Panc1 (cell line): ENCODE measurements at regions of chr7 and their contacts with region 1.

Region 1: DNA sequence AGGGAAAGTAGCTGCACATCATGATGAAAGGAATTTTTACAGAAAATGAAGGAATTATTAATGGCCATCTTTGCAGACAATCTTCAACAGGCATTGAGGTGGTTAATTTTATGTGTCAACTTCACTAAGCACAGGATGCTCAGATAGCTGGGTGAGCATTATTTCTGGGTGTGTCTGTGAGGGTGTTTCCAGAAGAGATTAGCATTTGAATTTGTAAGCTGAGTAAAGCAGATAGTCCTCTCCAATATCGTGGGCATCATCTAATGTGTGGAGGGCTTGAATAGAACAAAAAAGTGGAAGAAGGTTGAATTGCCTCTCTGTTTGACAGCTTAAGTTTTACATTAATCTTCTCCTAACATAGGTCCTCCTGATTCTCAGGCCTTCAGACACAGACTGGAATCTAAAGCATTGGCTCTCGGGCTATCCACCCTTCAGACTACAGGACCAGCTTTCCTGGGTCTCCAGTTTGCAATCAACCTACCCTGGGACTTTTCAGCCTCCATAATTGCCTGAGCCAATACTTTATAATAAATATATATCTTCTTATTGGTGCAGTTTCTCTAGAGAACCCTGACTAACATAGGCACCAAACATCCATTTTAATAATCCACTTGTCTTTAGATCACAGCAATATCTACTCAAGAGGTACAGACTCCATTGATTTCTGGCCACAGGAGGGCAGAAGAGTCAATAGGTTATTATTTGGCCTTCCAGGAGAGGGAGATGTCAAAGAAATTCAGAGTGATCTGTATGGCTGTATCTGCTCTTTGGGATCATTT is 10.5 kb upstream of the CRPPA start:
- DNase-seq: no peak
- ATAC-seq: peak; percentile 97
- H3K4me3 ChIP-seq: no peak overlapping the region
- H3K27ac ChIP-seq: no peak overlapping the region
- H3K4me1 ChIP-seq: no peaks in the 10 kb centered on the region
- H3K27me3 ChIP-seq: no peaks in the 10 kb centered on the region
- CTCF ChIP-seq: peak; percentile 77

Region 2: GRCh38 chr7:16078076-16078952 is 353.5 kb before region 1 on chr7:
- CTCF ChIA-PET with region 1: interaction called, 3 read pairs
- POLR2A ChIA-PET with region 1: no interaction called
- in situ Hi-C with region 1: no loop called
- intact Hi-C with region 1: loop called (anchors 5 kb)
- DNase-seq: peak; percentile 57
- ATAC-seq: peak; percentile 92
- H3K4me3 ChIP-seq: no peak overlapping the region
- H3K27ac ChIP-seq: no peak overlapping the region
- H3K4me1 ChIP-seq: no peaks in the 10 kb centered on the region
- H3K27me3 ChIP-seq: no peaks in the 10 kb centered on the region
- CTCF ChIP-seq: peak; percentile 78